Colonic mucosa (tissue), 4 donors: ENCODE measurements at regions of chr3 and their contacts with region 1.

Region 1: GRCh38 chr3:136919799-136920580 is 37.8 kb upstream of the IL20RB start:
- DNase-seq: no peak
- H3K4me3 ChIP-seq: no peak overlapping the region
- H3K27ac ChIP-seq: peak overlapping the region; percentile 1
- H3K4me1 ChIP-seq: no peaks in the 10 kb centered on the region
- H3K27me3 ChIP-seq: no peaks in the 10 kb centered on the region
- CTCF ChIP-seq: no peak

Region 2: DNA sequence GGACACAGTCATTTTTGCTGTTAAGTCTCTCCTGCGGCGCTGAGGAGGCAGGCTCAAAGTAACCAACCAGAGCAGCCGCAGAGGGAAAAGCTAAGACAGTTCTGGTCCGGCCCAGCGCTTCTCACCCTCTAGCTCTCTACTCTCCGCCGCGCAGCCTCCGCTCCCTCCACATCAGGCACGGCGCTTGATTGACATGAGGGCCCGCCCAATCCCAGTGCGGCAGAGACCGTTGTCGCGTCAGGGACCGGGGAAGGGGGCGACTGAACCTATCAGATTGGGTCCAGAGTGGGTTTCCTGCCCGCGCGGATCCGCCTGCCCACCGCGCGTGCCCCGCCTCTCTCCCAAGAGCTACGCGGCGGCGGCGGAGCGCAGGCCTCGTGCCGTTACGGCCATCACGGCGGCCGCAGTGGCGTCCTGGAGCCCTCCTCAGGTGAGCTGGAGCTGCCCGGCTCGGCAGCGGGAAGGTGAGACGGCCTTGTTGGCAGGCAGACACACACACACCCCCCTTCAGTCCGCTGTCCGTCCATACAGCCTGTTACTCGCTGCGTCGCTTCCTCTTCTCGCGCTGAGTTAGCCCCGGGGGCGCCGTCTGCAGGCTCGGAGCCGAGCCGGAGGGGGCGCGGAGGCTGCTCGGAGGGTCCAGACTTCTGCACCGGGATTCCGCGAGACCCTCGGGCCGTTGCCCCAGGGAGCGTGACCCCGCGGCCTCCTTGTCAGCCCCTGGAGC is 57.9 kb before region 1 on chr3 and contains the start of gene NCK1:
- intact Hi-C with region 1: loop called (anchors 10 kb)
- DNase-seq: peak; percentile 99
- H3K4me3 ChIP-seq: peak within 1 kb of the TSS; percentile 93
- H3K27ac ChIP-seq: peak within 1 kb of the TSS; percentile 98
- H3K4me1 ChIP-seq: no peaks in the 10 kb centered on the region
- H3K27me3 ChIP-seq: no peaks in the 10 kb centered on the region
- CTCF ChIP-seq: no peak
- total RNA-seq, gene NCK1: 33.8 to 72.3 TPM

Region 3: GRCh38 chr3:137191133-137191923 is 271.3 kb after region 1 on chr3:
- intact Hi-C with region 1: no loop called
- DNase-seq: no peak
- H3K4me3 ChIP-seq: no peak overlapping the region
- H3K27ac ChIP-seq: no peak overlapping the region
- H3K4me1 ChIP-seq: no peaks in the 10 kb centered on the region
- H3K27me3 ChIP-seq: no peaks in the 10 kb centered on the region
- CTCF ChIP-seq: no peak

Region 4: GRCh38 chr3:137692803-137693431 is 772.9 kb after region 1 on chr3:
- intact Hi-C with region 1: no loop called
- DNase-seq: peak; percentile 23
- H3K4me3 ChIP-seq: no peak overlapping the region
- H3K27ac ChIP-seq: no peak overlapping the region
- H3K4me1 ChIP-seq: no peaks in the 10 kb centered on the region
- H3K27me3 ChIP-seq: no peaks in the 10 kb centered on the region
- CTCF ChIP-seq: peak; percentile 15